Mammary epithelial cell (primary cell): ENCODE measurements at regions of chr6 and their contacts with region 1.

Region 1: DNA sequence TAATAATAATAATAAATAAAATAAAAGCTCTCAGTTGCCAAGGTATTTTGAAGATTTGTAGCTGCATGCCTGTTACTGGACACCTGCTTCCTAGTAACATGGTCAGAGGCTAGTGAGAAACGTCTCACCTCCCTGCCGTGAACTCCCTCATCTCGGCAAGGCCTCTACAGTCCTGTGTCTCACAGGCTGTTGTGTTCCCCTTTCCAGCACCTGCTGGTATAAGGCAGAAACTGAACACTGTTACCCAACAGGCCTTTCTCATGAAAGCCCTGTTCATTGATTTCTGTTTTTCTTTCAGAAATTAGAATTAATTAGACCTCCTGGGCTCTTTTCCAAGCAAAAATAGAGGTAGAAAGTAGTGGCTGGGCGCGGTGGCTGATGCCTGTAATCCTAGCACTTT is 17.6 kb upstream of the SRSF3 start:
- DNase-seq: no peak
- H3K4me3 ChIP-seq: no peak overlapping the region
- H3K27ac ChIP-seq: peak overlapping the region; percentile 74
- H3K4me1 ChIP-seq: peaks cover 32% of the 10 kb centered on the region
- H3K27me3 ChIP-seq: no peaks in the 10 kb centered on the region
- CTCF ChIP-seq: no peak

Region 2: DNA sequence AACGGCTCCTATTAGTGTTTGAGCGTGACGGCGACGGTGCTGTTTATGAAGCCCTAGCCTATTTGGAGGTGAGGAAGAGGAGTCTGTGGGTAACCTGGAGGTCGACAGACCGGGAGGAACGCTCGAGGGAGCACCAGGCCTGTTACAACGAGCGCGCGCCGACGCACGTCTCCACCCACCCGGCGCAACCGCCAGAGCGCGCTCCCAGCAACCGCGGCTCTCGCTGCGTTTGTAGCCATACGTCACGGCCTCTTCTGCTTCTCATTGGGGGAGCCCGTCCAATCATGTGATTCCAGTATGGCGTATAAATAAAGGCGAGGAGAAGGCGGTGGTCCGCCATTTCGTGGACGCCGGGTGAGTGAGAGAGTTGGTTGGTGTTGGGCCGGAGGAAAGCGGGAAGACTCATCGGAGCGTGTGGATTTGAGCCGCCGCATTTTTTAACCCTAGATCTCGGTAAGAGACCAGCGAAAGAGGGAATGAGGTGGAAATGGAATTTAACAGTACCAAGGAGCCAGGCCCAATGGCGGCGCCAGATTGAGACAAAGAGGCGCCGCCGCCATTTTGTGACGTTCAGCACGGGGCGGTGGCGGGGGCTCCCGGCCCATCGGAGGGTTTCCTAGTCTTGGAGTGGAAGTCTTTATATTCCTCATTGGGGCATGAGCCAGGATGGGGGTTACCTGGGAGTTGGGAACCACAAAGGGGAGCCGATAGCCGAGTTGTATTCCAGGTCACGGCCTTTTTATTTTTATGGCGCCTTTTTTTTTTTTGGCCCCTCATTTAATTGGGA is 17.7 kb after region 1 on chr6 and contains the start of gene SRSF3:
- CTCF ChIA-PET with region 1: no interaction called
- dilution Hi-C with region 1: no loop called
- in situ Hi-C with region 1: no loop called
- intact Hi-C with region 1: loop called (anchors 1 kb)
- DNase-seq: peak; percentile 97
- H3K4me3 ChIP-seq: peak within 1 kb of the TSS; percentile 68 to 99 (median 92)
- H3K27ac ChIP-seq: peak within 1 kb of the TSS; percentile 97
- H3K4me1 ChIP-seq: peaks cover 35% of the 10 kb centered on the region
- H3K27me3 ChIP-seq: no peaks in the 10 kb centered on the region
- CTCF ChIP-seq: peak in 1 of 2 donors; percentile 57
- total RNA-seq, gene SRSF3: 167 to 323 TPM

Region 3: GRCh38 chr6:36947570-36948351 is 371.2 kb after region 1 on chr6:
- CTCF ChIA-PET with region 1: interaction called, 12 read pairs
- dilution Hi-C with region 1: no loop called
- in situ Hi-C with region 1: no loop called
- intact Hi-C with region 1: no loop called
- DNase-seq: peak; percentile 79
- H3K4me3 ChIP-seq: no peak overlapping the region
- H3K27ac ChIP-seq: no peak overlapping the region
- H3K4me1 ChIP-seq: peaks cover 27% of the 10 kb centered on the region
- H3K27me3 ChIP-seq: peaks cover 2% of the 10 kb centered on the region
- CTCF ChIP-seq: no peak